ENCODE measurements at regions of chr9 and their contacts with region 1.

Region 1: DNA sequence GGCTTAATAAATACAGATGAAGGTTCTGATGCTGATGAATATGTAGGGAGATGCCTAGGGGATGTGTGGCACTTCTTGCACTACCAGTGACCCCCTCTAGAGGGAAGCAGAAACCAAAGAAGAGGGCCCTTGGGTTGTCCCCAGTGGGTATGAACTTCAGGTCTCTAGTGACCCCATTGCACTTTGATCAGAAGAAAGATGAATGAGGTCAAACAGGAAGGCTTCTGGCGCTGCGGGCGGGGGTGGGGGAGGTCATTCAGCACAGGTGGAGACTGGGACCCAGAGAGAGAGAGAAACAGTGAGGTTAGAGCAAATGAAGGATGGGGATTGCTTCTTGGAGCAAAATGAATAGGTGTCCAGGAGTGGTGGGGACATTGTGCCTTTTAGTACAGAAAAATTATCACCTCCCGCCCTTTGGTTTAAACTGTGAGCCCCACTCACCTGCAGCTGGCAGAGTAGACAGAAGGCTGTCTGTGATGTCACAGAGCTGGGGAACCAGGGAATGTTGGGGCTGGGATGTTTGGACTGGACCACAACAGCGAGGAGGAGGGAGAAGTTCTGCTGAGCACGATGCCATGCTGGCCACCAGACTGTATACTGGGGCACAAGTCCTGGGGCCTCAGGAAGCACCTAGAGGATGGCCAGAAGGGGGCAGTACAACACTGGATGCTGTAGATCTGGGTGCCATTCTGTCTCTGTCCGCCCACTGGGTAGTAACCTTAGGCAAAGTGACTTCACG is at the start of gene TEX48:
- DNase-seq: peak; percentile 55 to 91 (median 70)
- ATAC-seq: peak; percentile 83
- H3K4me3 ChIP-seq: no peak within 1 kb of the TSS
- H3K4me3 Mint-ChIP-seq: no peak within 1 kb of the TSS
- H3K27ac ChIP-seq: no peak within 1 kb of the TSS
- H3K27ac Mint-ChIP-seq: no peak within 1 kb of the TSS
- H3K4me1 ChIP-seq: peaks cover 11% of the 10 kb centered on the region
- H3K4me1 Mint-ChIP-seq: peaks cover 11% of the 10 kb centered on the region
- H3K27me3 ChIP-seq: peaks cover 0 to 14% of the 10 kb centered on the region in 2 experiments
- H3K27me3 Mint-ChIP-seq: peaks cover 15% of the 10 kb centered on the region
- CTCF ChIP-seq: peak; percentile 74
- total RNA-seq, gene TEX48: not detected

Region 2: GRCh38 chr9:114721491-114722079 is 39.8 kb after region 1 on chr9:
- CTCF ChIA-PET with region 1: interaction called, 4 read pairs
- POLR2A ChIA-PET with region 1: no interaction called
- intact Hi-C with region 1: loop called in 1 of 2 experiments (anchors 5 kb)
- DNase-seq: no peak
- ATAC-seq: no peak
- H3K4me3 ChIP-seq: no peak overlapping the region
- H3K4me3 Mint-ChIP-seq: no peak overlapping the region
- H3K27ac ChIP-seq: no peak overlapping the region
- H3K27ac Mint-ChIP-seq: no peak overlapping the region
- H3K4me1 ChIP-seq: peaks cover 35% of the 10 kb centered on the region
- H3K4me1 Mint-ChIP-seq: peaks cover 35% of the 10 kb centered on the region
- H3K27me3 ChIP-seq: no peaks in the 10 kb centered on the region
- H3K27me3 Mint-ChIP-seq: no peaks in the 10 kb centered on the region
- CTCF ChIP-seq: no peak

Region 3: GRCh38 chr9:114906908-114907571 is 225.3 kb after region 1 on chr9:
- CTCF ChIA-PET with region 1: interaction called, 6 read pairs
- POLR2A ChIA-PET with region 1: no interaction called
- intact Hi-C with region 1: loop called (anchors 1 to 2 kb)
- DNase-seq: peak in 4 of 14 experiments; percentile 34 to 66 (median 56)
- ATAC-seq: no peak
- H3K4me3 ChIP-seq: no peak overlapping the region
- H3K4me3 Mint-ChIP-seq: no peak overlapping the region
- H3K27ac ChIP-seq: peak overlapping the region in 1 of 2 donors; percentile 7
- H3K27ac Mint-ChIP-seq: peak overlapping the region; percentile 85
- H3K4me1 ChIP-seq: peaks cover 84% of the 10 kb centered on the region
- H3K4me1 Mint-ChIP-seq: peaks cover 55% of the 10 kb centered on the region
- H3K27me3 ChIP-seq: no peaks in the 10 kb centered on the region
- H3K27me3 Mint-ChIP-seq: no peaks in the 10 kb centered on the region
- CTCF ChIP-seq: peak; percentile 69

Region 4: DNA sequence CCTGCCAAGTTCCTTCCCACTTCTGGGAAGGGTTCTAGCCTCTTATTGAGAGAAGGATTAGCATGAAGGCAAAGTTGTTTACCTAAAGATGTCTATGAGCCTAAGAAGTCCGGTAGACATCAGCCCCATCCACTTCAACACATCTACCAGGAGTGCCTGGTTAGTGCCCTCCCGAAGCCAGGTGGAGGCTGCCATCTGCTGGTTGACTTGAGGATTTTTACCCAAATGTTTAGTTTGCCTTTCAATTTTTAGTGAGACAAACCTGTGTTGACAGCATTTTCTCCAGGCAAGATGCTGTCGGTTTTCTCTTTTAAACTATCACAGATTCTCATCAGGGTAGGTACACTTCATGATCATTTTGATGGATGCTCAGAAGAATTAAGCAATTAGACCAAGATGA is 332.2 kb after region 1 on chr9:
- CTCF ChIA-PET with region 1: interaction called, 18 read pairs
- POLR2A ChIA-PET with region 1: no interaction called
- intact Hi-C with region 1: loop called (anchors 1 kb)
- DNase-seq: peak; percentile 68 to 89 (median 74)
- ATAC-seq: peak; percentile 82
- H3K4me3 ChIP-seq: no peak overlapping the region
- H3K4me3 Mint-ChIP-seq: no peak overlapping the region
- H3K27ac ChIP-seq: no peak overlapping the region
- H3K27ac Mint-ChIP-seq: no peak overlapping the region
- H3K4me1 ChIP-seq: peaks cover 9% of the 10 kb centered on the region
- H3K4me1 Mint-ChIP-seq: peaks cover 13% of the 10 kb centered on the region
- H3K27me3 ChIP-seq: no peaks in the 10 kb centered on the region
- H3K27me3 Mint-ChIP-seq: no peaks in the 10 kb centered on the region
- CTCF ChIP-seq: peak; percentile 82

Region 5: GRCh38 chr9:116494815-116495634 is 1813.3 kb after region 1 on chr9:
- CTCF ChIA-PET with region 1: no interaction called
- POLR2A ChIA-PET with region 1: no interaction called
- intact Hi-C with region 1: loop called in 1 of 2 experiments (anchors 10 kb)
- DNase-seq: peak in 5 of 14 experiments; percentile 3 to 34 (median 19)
- ATAC-seq: no peak
- H3K4me3 ChIP-seq: no peak overlapping the region
- H3K4me3 Mint-ChIP-seq: no peak overlapping the region
- H3K27ac ChIP-seq: no peak overlapping the region
- H3K27ac Mint-ChIP-seq: no peak overlapping the region
- H3K4me1 ChIP-seq: no peaks in the 10 kb centered on the region
- H3K4me1 Mint-ChIP-seq: no peaks in the 10 kb centered on the region
- H3K27me3 ChIP-seq: no peaks in the 10 kb centered on the region
- H3K27me3 Mint-ChIP-seq: no peaks in the 10 kb centered on the region
- CTCF ChIP-seq: peak; percentile 43

Measured in CD4-positive, alpha-beta T cell (primary cell).